ENCODE measurements at regions of chr7 and their contacts with region 1.

Region 1: DNA sequence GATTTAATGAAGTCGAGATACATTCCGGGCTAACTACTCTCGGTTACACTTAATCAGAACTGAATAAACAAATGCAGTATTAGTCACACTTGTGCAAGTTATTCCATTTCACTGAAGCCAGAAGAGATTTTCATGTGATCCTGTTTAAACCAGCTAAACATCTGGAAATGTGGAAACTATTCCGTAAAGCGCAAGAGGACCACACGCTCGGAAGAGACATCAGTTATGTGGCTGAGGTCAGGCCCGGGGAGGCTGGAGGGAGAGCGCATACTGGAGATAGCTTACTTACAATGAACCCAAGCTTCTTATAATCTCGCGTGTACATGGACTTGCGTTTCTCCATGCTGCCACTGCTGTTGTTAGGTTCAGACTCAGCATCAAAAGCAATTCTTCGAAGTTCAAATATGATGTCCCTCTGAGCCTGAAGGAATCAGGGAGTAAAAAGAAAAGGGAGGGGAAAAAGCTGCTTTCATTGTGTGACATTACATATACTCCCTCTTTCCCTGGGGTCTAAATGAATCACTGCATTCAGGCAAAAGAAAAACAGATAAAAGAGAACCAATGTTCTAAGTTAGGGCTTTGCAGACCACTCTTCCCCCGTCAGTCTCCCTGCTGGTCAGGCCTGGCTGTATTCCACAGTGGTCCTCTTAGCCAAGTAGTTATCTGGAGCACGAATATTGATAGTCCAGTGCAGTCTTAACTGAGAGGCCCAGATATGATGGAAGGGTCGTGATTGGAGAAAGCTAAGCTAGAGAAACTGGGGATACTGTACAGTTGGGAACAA is 237.4 kb downstream of the ELMO1 start:
- DNase-seq: peak in 3 of 4 donors; percentile 61 to 91 (median 88)
- ATAC-seq: peak; percentile 76
- H3K4me3 ChIP-seq: no peak overlapping the region
- H3K27ac ChIP-seq: peak overlapping the region; percentile 4 to 63
- H3K4me1 ChIP-seq: peaks cover 19 to 22% of the 10 kb centered on the region in 2 donors
- H3K27me3 ChIP-seq: no peaks in the 10 kb centered on the region
- CTCF ChIP-seq: no peak

Region 2: GRCh38 chr7:36794689-36795088 is 416.6 kb before region 1 on chr7:
- intact Hi-C with region 1: no loop called
- DNase-seq: no peak
- ATAC-seq: no peak
- H3K4me3 ChIP-seq: no peak overlapping the region
- H3K27ac ChIP-seq: no peak overlapping the region
- H3K4me1 ChIP-seq: no peaks in the 10 kb centered on the region
- H3K27me3 ChIP-seq: no peaks in the 10 kb centered on the region
- CTCF ChIP-seq: no peak

Region 3: DNA sequence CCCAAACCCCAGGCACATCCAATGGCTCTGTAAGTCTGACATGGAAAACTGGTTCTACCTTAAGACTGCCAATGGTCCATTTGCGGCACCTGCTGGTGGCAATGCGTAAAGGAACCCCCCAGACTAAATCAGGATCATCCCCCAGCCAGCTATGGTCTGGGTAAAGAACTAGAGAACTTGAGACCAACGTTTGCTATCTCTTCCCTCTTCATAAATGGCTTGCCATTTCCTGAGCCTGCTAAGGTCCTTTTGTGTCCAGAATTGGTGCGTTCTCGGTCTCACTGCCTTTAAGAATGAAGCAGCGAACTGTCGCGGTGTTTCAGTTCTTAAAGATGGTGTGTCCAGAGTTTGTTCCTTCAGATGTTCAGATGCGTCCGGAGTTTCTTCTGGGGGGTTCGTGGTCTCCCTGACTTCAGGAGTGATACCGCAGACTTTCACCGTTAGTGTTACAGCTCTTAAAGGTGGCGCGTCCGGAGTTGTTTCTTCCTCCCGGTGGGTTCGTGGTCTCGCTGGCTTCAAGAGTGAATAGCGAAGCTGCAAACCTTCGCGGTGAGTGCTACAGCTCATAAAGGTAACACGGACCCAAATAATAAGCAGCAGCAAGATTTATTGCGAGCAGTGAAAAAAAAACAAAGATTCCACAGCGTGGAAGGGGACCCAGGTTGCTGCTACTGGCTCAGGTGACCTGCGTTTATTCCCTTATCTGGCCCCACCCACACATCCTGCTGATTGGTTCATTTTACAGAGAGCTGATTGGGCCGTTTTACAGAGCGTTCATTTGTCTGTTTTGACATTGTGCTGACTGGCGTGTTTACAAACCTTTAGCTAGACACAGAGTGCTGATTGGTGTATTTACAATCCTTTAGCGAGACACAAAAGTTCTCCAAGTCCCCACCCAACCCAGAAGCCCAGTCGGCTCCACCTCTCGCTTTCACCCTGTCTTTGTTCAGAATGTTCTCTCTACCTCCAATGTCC is 142.0 kb after region 1 on chr7:
- intact Hi-C with region 1: loop called in 1 of 2 experiments (anchors 10 kb)
- DNase-seq: peak in 1 of 4 donors; percentile 62
- ATAC-seq: peak; percentile 31
- H3K4me3 ChIP-seq: peak overlapping the region in 1 of 2 donors; percentile 41
- H3K27ac ChIP-seq: peak overlapping the region in 1 of 2 donors; percentile 75
- H3K4me1 ChIP-seq: peaks cover 15 to 60% of the 10 kb centered on the region in 2 donors
- H3K27me3 ChIP-seq: no peaks in the 10 kb centered on the region
- CTCF ChIP-seq: peak; percentile 25 to 53